ENCODE measurements at regions of chr15 and their contacts with region 1.

Region 1: GRCh38 chr15:91271565-91272153 is 171.6 kb downstream of the SV2B start:
- DNase-seq: peak; percentile 23 to 84 (median 44)
- ATAC-seq: peak; percentile 71
- H3K4me3 ChIP-seq: no peak overlapping the region
- H3K4me3 Mint-ChIP-seq: no peak overlapping the region
- H3K27ac ChIP-seq: no peak overlapping the region
- H3K27ac Mint-ChIP-seq: no peak overlapping the region
- H3K4me1 ChIP-seq: peaks cover 5% of the 10 kb centered on the region
- H3K4me1 Mint-ChIP-seq: peaks cover 6% of the 10 kb centered on the region
- H3K27me3 ChIP-seq: no peaks in the 10 kb centered on the region
- H3K27me3 Mint-ChIP-seq: peaks cover 28% of the 10 kb centered on the region
- CTCF ChIP-seq: peak; percentile 82

Region 2: GRCh38 chr15:90902040-90902839 is 369.4 kb before region 1 on chr15:
- CTCF ChIA-PET with region 1: no interaction called
- POLR2A ChIA-PET with region 1: no interaction called
- intact Hi-C with region 1: loop called in 1 of 2 experiments (anchors 5 kb)
- DNase-seq: peak; percentile 52 to 88 (median 62)
- ATAC-seq: peak; percentile 67
- H3K4me3 ChIP-seq: peak overlapping the region; percentile 69
- H3K4me3 Mint-ChIP-seq: peak overlapping the region; percentile 87
- H3K27ac ChIP-seq: peak overlapping the region; percentile 15 to 65
- H3K27ac Mint-ChIP-seq: peak overlapping the region; percentile 76
- H3K4me1 ChIP-seq: peaks cover 19% of the 10 kb centered on the region
- H3K4me1 Mint-ChIP-seq: peaks cover 34% of the 10 kb centered on the region
- H3K27me3 ChIP-seq: no peaks in the 10 kb centered on the region
- H3K27me3 Mint-ChIP-seq: no peaks in the 10 kb centered on the region
- CTCF ChIP-seq: peak; percentile 91

Region 3: DNA sequence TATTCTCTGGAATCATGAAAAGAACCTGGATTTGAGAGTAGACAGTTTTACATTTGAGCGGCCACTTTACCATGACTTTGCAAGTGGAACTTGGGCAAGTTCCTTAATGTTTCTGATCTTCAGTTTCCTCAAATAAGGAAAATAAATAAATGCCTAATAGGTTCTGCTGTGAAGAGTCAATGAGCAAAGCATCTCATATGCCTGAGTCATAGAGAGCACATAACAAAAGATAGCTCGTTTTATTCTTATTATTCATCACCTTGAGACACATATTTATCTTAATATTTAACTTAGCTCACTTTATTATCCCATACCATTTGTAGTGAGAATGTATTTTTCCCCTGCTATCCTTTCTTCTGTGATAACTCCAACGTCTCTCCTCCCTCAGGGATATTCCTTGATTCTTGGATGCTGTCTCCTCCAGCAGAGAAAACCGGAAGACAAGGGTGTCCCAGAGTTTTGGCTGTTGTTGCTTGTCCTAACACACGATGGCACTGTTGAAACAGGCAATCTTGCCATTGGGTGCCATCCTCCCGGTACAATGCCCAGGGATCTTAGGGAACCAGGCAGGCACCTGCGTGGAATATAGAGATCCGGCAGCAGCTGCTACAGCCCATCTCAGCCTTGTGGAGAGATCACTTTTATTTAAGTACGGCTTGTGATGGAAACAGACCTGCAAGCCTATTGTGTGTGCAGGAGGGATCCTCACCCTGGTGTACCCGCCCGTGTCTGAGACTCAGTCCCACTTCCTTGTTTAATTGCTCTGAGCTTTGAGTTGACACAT is 215.9 kb before region 1 on chr15:
- CTCF ChIA-PET with region 1: interaction called, 7 read pairs
- POLR2A ChIA-PET with region 1: no interaction called
- intact Hi-C with region 1: loop called (anchors 1 kb)
- DNase-seq: peak in 8 of 14 experiments; percentile 9 to 60 (median 22)
- ATAC-seq: peak; percentile 44
- H3K4me3 ChIP-seq: no peak overlapping the region
- H3K4me3 Mint-ChIP-seq: no peak overlapping the region
- H3K27ac ChIP-seq: no peak overlapping the region
- H3K27ac Mint-ChIP-seq: no peak overlapping the region
- H3K4me1 ChIP-seq: peaks cover 4% of the 10 kb centered on the region
- H3K4me1 Mint-ChIP-seq: no peaks in the 10 kb centered on the region
- H3K27me3 ChIP-seq: peaks cover 27 to 38% of the 10 kb centered on the region in 2 experiments
- H3K27me3 Mint-ChIP-seq: peaks cover 73% of the 10 kb centered on the region
- CTCF ChIP-seq: peak; percentile 74

Region 4: GRCh38 chr15:91393186-91393585 is 121.5 kb after region 1 on chr15:
- CTCF ChIA-PET with region 1: no interaction called
- POLR2A ChIA-PET with region 1: no interaction called
- intact Hi-C with region 1: no loop called
- DNase-seq: no peak
- ATAC-seq: no peak
- H3K4me3 ChIP-seq: no peak overlapping the region
- H3K4me3 Mint-ChIP-seq: no peak overlapping the region
- H3K27ac ChIP-seq: no peak overlapping the region
- H3K27ac Mint-ChIP-seq: no peak overlapping the region
- H3K4me1 ChIP-seq: no peaks in the 10 kb centered on the region
- H3K4me1 Mint-ChIP-seq: no peaks in the 10 kb centered on the region
- H3K27me3 ChIP-seq: no peaks in the 10 kb centered on the region
- H3K27me3 Mint-ChIP-seq: peaks cover 27% of the 10 kb centered on the region
- CTCF ChIP-seq: no peak